ENCODE measurements at regions of chr10 and their contacts with region 1.

Region 1: DNA sequence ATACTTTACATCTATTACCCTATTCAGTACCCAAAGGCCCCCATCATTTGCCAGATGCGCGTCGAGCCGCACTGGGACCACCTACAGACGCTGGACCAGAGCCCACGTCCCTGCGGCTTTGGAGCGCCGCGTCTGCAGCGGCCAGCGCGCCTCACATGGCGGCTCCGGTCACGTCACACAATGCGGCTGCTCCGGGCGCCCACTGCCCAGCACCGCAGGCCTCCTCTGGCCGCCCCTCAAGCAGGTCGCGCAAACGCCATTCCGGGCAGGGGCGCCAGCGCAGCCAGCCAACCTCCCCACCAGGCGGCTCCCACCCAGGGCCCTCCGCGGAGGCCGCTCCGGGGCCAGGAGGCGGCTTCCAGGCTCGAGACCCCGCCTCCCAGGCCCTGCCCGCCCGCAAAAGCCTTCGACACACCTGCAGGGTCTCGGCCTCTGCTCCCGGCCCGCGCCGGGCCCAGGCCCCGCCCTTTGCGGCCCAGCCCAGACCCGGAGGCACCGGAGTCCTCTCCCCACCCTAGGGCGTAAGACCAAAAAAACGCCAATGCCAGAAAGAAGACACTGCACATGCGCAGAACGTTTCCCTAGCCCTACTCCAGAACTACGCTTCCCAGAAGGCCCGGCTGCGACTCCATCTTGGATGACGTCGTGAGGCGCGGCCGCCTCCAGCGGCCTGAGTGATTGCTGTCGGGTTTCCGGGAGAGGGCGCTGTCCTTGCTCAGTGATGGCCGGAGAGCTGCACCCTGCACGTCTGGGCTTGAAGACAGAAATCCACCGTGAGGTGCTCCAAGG is at the start of gene ZNF25:
- DNase-seq: peak; percentile 95
- H3K4me3 Mint-ChIP-seq: peak within 1 kb of the TSS; percentile 93
- H3K27ac Mint-ChIP-seq: peak within 1 kb of the TSS; percentile 84
- H3K4me1 Mint-ChIP-seq: peaks cover 9% of the 10 kb centered on the region
- H3K27me3 Mint-ChIP-seq: no peaks in the 10 kb centered on the region
- CTCF ChIP-seq: peak; percentile 70
- total RNA-seq, gene ZNF25: 2.8 and 3.0 TPM in 2 replicates

Region 2: GRCh38 chr10:37780536-37780935 is 195.7 kb before region 1 on chr10:
- CTCF ChIA-PET with region 1: no interaction called
- intact Hi-C with region 1: no loop called
- DNase-seq: no peak
- H3K4me3 Mint-ChIP-seq: no peak overlapping the region
- H3K27ac Mint-ChIP-seq: no peak overlapping the region
- H3K4me1 Mint-ChIP-seq: no peaks in the 10 kb centered on the region
- H3K27me3 Mint-ChIP-seq: no peaks in the 10 kb centered on the region
- CTCF ChIP-seq: no peak

Region 3: DNA sequence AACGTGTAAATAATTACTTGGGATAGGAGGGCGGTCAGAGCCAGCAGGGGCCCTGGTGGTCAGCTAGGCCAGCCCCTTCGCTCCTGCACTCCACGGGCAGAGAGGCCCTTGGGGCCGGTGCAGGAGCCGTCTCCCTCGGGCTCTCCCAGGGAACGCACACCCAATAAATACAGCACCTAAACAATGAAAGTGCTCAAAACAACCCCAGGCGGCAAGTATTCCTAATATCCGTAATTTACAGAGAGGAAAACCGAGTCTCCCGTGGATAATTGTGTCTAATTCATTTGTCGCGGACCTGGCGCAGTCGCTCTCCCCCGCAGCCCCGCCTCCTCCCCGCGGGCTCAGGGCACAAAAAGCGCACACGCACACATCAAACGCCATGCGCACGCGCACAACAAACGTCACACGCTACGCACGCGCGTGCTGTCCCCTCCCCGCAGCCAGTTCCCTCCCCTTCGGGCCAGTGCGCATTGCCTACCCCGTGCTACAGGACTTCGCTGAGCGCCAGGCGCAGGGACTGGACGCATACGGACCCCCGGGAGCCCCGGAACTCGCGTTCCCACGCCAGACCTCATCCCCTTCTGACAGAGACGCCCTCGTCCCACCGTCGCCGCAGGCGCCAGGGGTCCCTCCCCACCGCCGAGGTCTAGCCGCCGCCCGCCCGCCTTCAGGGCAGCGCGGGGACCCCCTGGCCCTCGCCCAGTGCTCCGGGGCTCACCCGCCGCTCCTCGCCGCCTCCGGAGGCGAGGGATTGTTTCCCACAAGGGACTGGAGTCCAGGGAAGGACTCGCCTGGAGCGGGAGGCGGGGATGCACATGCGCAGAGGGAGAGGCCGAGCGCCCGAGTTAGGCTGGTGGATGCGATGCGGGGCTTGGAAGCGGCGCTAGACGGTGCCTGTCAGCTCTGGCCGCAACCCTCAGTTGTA is 118.7 kb before region 1 on chr10 and contains the start of gene ZNF248:
- CTCF ChIA-PET with region 1: no interaction called
- intact Hi-C with region 1: loop called (anchors 5 kb)
- DNase-seq: peak; percentile 93
- H3K4me3 Mint-ChIP-seq: peak within 1 kb of the TSS; percentile 98
- H3K27ac Mint-ChIP-seq: peak within 1 kb of the TSS; percentile 92
- H3K4me1 Mint-ChIP-seq: peaks cover 9% of the 10 kb centered on the region
- H3K27me3 Mint-ChIP-seq: no peaks in the 10 kb centered on the region
- CTCF ChIP-seq: no peak
- total RNA-seq, gene ZNF248: 8.9 and 10.8 TPM in 2 replicates

Region 4: DNA sequence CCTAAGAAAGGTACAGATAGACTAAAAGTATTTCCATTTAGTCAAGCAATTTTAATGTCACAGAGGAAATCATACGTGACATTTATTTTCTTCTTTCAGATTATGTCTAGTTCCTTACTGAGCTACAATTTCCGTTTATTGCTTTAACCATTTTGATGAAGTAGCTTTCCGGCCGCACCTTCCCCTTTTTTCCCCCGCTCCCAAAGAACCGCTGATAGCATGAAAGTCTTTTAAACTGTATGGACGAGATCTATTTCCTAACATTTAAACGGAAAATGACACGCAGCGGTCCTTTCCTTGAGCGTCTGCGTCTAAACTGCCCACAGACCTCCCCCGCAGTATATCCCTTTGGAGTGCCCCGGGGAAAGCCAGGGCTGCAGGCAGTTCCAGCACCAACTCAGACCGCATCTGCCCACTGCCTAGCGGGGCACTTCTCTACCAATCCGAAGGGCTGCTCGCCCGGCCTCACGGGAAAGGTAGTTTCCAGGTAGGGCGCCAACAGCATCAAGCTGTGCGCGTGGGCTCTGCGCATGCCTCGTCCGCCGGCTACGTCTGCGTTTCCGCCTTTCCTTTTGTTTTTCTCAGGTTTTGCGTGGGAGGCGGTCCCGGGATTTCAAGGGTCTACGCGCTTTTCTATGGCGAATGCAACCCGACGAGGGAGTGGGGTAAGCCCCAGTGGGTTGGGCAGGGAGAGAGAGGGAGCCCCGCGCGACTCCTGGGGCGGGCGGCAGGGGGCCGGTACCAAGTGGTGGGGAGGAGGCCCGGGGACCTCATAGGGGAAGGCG is 34.0 kb after region 1 on chr10 and contains the start of gene ZNF33A:
- CTCF ChIA-PET with region 1: interaction called, 14 read pairs
- intact Hi-C with region 1: no loop called
- DNase-seq: peak; percentile 91
- H3K4me3 Mint-ChIP-seq: peak within 1 kb of the TSS; percentile 94
- H3K27ac Mint-ChIP-seq: peak within 1 kb of the TSS; percentile 97
- H3K4me1 Mint-ChIP-seq: no peaks in the 10 kb centered on the region
- H3K27me3 Mint-ChIP-seq: no peaks in the 10 kb centered on the region
- CTCF ChIP-seq: no peak
- total RNA-seq, gene ZNF33A: 19.0 and 21.7 TPM in 2 replicates

Region 5: DNA sequence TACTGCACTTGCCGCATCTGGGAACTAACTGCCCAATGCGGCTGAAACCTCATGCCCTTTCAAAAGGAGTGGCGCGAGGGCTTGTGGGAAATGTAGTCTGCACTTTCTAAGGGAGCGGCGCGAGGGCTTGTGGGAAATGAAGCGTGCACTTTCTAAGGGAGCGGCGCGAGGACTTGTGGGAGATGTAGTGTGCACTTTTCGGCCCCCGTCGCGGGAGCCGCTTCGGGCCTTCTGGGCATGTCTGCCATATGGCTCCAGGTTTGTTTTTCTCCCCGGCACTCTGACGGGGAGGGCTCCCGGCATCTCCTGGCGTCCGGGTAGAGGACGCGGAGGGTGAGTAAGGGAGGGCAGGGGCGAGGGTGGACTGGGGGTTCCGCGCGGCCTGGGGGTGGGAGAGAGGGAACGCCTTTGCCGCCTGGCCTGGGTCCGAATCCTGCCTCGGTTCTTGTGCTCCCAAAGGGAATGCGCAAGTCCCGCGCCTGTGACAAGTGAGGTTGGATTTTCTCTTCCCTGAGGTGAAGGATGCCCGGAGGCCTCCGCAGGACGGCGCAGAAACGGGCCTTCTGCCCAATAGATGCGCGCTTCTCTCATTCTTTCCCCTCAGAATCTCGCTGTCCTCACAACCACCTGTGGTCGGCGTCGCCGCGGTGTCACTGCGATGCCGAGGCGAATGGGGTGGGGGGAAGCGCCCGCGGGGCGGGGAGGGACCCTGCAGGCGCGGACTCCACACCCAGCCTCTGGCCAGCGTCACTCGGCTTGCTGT is 118.1 kb after region 1 on chr10 and contains the start of gene ZNF37A:
- CTCF ChIA-PET with region 1: no interaction called
- intact Hi-C with region 1: loop called (anchors 5 kb)
- DNase-seq: peak; percentile 81
- H3K4me3 Mint-ChIP-seq: peak within 1 kb of the TSS; percentile 84
- H3K27ac Mint-ChIP-seq: peak within 1 kb of the TSS; percentile 88
- H3K4me1 Mint-ChIP-seq: no peaks in the 10 kb centered on the region
- H3K27me3 Mint-ChIP-seq: no peaks in the 10 kb centered on the region
- CTCF ChIP-seq: no peak
- total RNA-seq, gene ZNF37A: 8.1 and 8.6 TPM in 2 replicates

Measured in Calu3 (cell line).